ENCODE measurements at regions of chr12 and their contacts with region 1.

Region 1: DNA sequence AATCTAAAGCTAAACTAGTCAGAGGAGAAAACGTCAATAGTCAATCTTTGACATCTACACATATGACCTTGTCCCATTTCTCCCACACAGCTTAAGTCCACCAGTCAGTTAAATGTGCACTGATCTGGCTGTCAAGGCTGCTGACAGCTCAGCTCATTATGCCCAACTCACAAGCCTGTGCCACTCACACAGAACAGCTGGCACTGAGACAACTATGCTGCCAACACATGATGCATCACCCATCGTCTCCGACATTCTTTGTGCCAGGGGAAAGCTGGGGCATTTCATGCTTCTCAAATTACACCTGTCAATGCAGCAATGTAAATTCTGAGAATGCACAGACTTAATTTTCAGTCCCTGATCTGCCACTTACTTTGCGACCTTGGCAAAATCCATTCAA is 25.3 kb downstream of the GNS start:
- DNase-seq: peak; percentile 29 to 76
- ATAC-seq: peak; percentile 94 to 99 (median 97)
- H3K4me3 ChIP-seq: no peak overlapping the region
- H3K27ac ChIP-seq: peak overlapping the region; percentile 38
- H3K4me1 ChIP-seq: peaks cover 9% of the 10 kb centered on the region
- H3K27me3 ChIP-seq: no peaks in the 10 kb centered on the region
- CTCF ChIP-seq: no peak

Region 2: DNA sequence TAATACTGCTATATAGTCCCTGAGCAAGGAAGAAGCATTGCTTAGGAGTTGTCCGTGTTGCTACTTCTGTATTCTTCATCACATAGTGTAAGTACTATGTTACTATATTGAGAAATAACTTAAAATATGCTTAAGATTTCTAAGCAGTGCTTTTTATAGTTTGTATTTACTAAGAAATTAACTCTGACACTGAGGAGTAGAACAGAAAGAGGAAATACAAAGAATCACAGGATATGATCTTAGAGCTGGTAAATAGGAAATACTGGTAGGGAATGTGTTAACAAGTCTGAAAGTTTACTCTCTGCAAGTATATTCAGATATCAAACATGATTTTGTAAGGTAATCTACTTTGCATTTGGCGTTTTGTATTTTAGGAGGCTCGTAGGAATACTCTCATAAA is 314.2 kb before region 1 on chr12:
- intact Hi-C with region 1: loop called in 1 of 2 experiments (anchors 10 kb)
- DNase-seq: no peak
- ATAC-seq: no peak
- H3K4me3 ChIP-seq: no peak overlapping the region
- H3K27ac ChIP-seq: no peak overlapping the region
- H3K4me1 ChIP-seq: no peaks in the 10 kb centered on the region
- H3K27me3 ChIP-seq: no peaks in the 10 kb centered on the region
- CTCF ChIP-seq: no peak

Measured in psoas muscle (tissue), 8 donors.